AG04449 (cell line): ENCODE measurements at regions of chr1 and their contacts with region 1.

Region 1: DNA sequence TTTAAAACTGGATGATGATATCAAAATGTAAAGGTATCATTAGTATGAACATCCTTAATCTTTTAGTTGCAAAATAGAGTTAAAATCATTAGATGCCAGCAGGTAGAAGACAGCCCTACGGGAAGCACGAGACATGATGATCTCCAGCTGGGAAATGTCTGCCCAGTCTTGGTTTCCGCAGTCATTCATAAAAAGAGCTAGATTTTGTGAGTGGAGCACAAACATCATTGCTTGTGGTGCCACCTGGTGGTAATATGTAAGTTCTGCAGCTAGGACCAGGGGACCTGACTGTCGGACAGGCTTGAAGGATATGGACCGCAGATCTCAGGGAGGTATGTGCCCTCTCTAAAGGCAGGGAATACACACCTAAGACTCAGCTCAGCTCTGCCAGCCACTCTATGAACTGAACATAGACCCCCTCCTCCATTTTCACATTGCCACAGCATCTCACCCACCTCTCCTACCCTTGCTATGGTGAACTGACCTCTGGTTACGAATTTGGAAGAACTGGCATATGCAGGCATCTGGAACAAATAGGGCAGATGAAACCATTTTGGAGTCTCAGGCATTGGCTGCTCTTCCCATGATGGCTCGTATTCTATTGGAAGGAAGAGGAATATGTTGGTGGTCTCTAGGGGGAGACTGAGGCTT is 9.2 kb downstream of the FCMR start:
- DNase-seq: no peak
- H3K4me3 ChIP-seq: no peak overlapping the region
- CTCF ChIP-seq: peak; percentile 73

Region 2: GRCh38 chr1:206583707-206584648 is 328.6 kb before region 1 on chr1:
- CTCF ChIA-PET with region 1: no interaction called
- POLR2A ChIA-PET with region 1: no interaction called
- DNase-seq: no peak
- H3K4me3 ChIP-seq: no peak overlapping the region
- CTCF ChIP-seq: peak; percentile 72

Region 3: DNA sequence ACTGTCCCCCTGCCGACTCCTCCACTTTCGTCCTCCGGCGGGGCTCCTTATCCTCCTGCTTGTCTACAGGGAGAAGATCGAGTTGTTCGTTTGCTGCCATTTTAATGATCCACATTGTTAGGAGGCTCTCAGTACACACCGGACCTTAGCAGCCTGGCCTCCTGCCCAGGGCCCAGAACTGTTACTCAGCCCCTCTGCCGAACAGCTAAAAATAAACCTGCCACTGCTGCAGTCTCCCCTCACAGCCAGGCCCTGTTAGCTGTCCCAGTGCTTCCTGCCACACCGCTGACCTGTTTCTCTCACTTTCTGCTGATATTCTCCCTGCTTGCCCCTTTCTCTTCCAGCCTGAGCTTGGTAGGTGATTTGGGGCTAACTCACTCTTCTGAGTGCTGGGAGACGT is 219.5 kb before region 1 on chr1:
- CTCF ChIA-PET with region 1: interaction called, 11 read pairs
- POLR2A ChIA-PET with region 1: no interaction called
- DNase-seq: no peak
- H3K4me3 ChIP-seq: peak overlapping the region; percentile 6; the same call in 1 of the 2 replicates
- CTCF ChIP-seq: no peak

Region 4: GRCh38 chr1:206761159-206761768 is 151.3 kb before region 1 on chr1:
- CTCF ChIA-PET with region 1: interaction called, 22 read pairs
- POLR2A ChIA-PET with region 1: no interaction called
- DNase-seq: no peak
- H3K4me3 ChIP-seq: no peak overlapping the region
- CTCF ChIP-seq: peak; percentile 36

Region 5: GRCh38 chr1:206826405-206826804 is 86.2 kb before region 1 on chr1:
- CTCF ChIA-PET with region 1: interaction called, 51 read pairs
- POLR2A ChIA-PET with region 1: no interaction called
- DNase-seq: no peak
- H3K4me3 ChIP-seq: no peak overlapping the region
- CTCF ChIP-seq: no peak

Region 6: DNA sequence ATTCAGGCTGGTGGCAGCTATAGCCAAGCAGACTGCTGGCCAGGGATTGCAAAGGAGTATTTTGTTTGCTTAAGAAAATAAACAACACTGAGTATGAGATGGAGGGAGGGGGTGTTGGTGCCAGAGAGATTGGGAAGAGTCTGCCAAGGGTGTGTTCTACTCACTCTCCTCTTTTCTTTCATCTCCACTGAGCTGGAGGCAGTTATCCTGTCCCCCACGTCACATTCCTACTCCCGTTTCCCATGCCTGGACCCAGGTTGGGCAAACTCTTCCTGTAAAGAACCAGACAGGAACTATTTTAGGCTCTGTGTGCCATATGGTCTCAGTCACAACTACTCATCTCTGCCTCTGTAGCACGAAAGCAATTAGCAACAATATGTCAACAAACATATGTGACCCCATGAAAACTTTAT is 16.7 kb before region 1 on chr1:
- CTCF ChIA-PET with region 1: interaction called, 43 read pairs
- POLR2A ChIA-PET with region 1: no interaction called
- DNase-seq: no peak
- H3K4me3 ChIP-seq: no peak overlapping the region
- CTCF ChIP-seq: no peak

Region 7: GRCh38 chr1:206953126-206953525 is 40.6 kb after region 1 on chr1:
- CTCF ChIA-PET with region 1: no interaction called
- POLR2A ChIA-PET with region 1: no interaction called
- DNase-seq: no peak
- H3K4me3 ChIP-seq: no peak overlapping the region
- CTCF ChIP-seq: no peak

Region 8: GRCh38 chr1:207077470-207078377 is 165.2 kb after region 1 on chr1:
- CTCF ChIA-PET with region 1: interaction called, 17 read pairs
- POLR2A ChIA-PET with region 1: no interaction called
- DNase-seq: peak; percentile 23
- H3K4me3 ChIP-seq: no peak overlapping the region
- CTCF ChIP-seq: peak; percentile 86